Mammary epithelial cell (primary cell): ENCODE measurements at regions of chr11 and their contacts with region 1.

Region 1: DNA sequence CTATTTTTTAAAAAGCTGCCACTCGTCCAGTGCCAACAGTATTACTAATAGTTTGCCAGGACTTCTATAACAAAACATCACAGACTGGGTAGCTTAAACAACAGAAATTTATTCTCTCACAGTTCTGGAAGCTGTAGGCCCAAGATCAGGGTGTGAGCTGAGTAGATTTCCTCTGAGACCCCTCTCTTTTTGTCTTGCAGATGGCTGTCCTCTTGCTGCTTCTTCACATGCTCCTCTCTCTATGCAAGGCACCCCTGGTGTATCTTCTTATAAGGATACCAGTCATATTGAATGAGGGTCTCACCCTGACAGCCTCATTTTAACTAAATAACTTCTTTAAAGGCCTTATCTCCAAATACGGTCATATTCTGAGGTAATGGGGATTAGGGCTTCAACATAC is 390.9 kb downstream of the DLG2 start:
- DNase-seq: no peak
- H3K4me3 ChIP-seq: no peak overlapping the region
- H3K27ac ChIP-seq: no peak overlapping the region
- H3K4me1 ChIP-seq: no peaks in the 10 kb centered on the region
- H3K27me3 ChIP-seq: peaks cover 1% of the 10 kb centered on the region
- CTCF ChIP-seq: no peak

Region 2: GRCh38 chr11:85385547-85385946 is 149.3 kb after region 1 on chr11:
- CTCF ChIA-PET with region 1: no interaction called
- dilution Hi-C with region 1: no loop called
- in situ Hi-C with region 1: loop called in 1 of 2 experiments (anchors 25 kb)
- intact Hi-C with region 1: no loop called
- DNase-seq: no peak
- H3K4me3 ChIP-seq: no peak overlapping the region
- H3K27ac ChIP-seq: no peak overlapping the region
- H3K4me1 ChIP-seq: no peaks in the 10 kb centered on the region
- H3K27me3 ChIP-seq: no peaks in the 10 kb centered on the region
- CTCF ChIP-seq: no peak